Left ventricle myocardium inferior (tissue), 1 donor: ENCODE measurements at regions of chr5 and their contacts with region 1.

Region 1: GRCh38 chr5:66010476-66010875 is 84.1 kb downstream of the ERBIN start:
- DNase-seq: no peak
- H3K4me3 ChIP-seq: no peak overlapping the region
- H3K27ac ChIP-seq: no peak overlapping the region
- H3K4me1 ChIP-seq: peaks cover 11% of the 10 kb centered on the region
- H3K27me3 ChIP-seq: no peaks in the 10 kb centered on the region
- CTCF ChIP-seq: no peak

Region 2: GRCh38 chr5:65184780-65185179 is 825.7 kb before region 1 on chr5:
- intact Hi-C with region 1: no loop called
- DNase-seq: no peak
- H3K4me3 ChIP-seq: no peak overlapping the region
- H3K27ac ChIP-seq: no peak overlapping the region
- H3K4me1 ChIP-seq: no peaks in the 10 kb centered on the region
- H3K27me3 ChIP-seq: no peaks in the 10 kb centered on the region
- CTCF ChIP-seq: no peak

Region 3: DNA sequence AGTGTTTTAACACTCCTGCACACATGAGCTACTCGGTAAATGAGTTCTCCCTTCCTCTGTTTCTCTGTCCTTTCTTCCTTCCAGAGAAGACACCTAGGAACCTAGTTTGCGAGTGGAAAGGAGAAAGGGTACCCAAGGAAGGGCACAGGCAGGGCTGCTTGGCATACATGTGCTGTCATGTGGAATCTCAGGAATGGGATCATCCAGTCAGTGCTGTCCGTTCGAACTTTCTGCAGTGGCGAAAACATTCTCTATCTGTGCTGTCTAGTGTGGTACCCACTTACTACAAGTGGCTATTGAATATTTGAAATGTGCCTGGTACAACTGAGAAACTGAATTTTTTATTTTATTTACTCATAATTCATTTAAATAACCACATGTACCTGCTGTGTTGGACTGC is 260.5 kb before region 1 on chr5:
- intact Hi-C with region 1: loop called (anchors 10 kb)
- DNase-seq: no peak
- H3K4me3 ChIP-seq: no peak overlapping the region
- H3K27ac ChIP-seq: no peak overlapping the region
- H3K4me1 ChIP-seq: peaks cover 6% of the 10 kb centered on the region
- H3K27me3 ChIP-seq: no peaks in the 10 kb centered on the region
- CTCF ChIP-seq: no peak

Region 4: GRCh38 chr5:65818592-65818991 is 191.9 kb before region 1 on chr5:
- intact Hi-C with region 1: no loop called
- DNase-seq: no peak
- H3K4me3 ChIP-seq: no peak overlapping the region
- H3K27ac ChIP-seq: no peak overlapping the region
- H3K4me1 ChIP-seq: no peaks in the 10 kb centered on the region
- H3K27me3 ChIP-seq: no peaks in the 10 kb centered on the region
- CTCF ChIP-seq: no peak

Region 5: DNA sequence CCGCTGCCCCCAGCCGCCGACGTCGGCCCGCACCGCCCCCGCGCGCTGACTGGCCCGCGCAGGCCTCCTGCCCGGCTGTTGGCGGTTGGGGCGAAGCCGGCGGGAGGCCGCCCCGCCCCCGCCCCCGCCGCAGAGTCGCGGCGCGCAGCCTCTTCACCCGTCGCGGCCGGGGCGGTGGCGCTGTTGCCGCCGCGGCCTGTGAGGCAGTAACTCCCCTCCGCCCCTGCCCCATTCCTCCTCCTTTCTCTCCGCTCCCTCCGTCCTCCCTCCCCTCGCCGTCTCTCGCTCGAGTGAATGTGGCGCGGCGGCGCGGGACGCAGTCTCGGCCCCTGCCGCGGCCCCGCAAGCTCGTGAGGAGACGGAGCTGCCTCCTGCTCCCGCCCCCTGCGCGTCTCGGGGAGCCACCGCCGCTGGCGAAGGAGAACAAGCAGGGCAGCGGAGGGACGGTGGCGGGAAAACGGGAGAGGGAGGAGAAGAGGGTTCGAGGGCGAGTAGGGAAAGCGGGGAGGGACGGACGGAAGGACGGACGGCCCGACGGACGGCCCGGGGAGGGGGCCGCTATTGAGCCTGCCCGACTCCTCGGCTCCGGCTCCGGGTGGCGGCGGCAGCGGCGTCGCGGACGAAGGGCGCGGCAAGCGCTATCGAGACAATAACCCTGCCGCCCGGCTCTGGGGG is 84.7 kb before region 1 on chr5:
- intact Hi-C with region 1: loop called (anchors 10 kb)
- DNase-seq: peak; percentile 85
- H3K4me3 ChIP-seq: peak overlapping the region; percentile 92
- H3K27ac ChIP-seq: peak overlapping the region; percentile 100
- H3K4me1 ChIP-seq: peaks cover 51% of the 10 kb centered on the region
- H3K27me3 ChIP-seq: no peaks in the 10 kb centered on the region
- CTCF ChIP-seq: peak; percentile 54